Activated CD8-positive, alpha-beta memory T cell treated with anti-CD3 and anti-CD28 coated beads, Interleukin-2, amount 10 ng/mL, durations not matched to agents 7 days and 5 days (primary cell): ENCODE measurements at regions of chr4 and their contacts with region 1.

Region 1: DNA sequence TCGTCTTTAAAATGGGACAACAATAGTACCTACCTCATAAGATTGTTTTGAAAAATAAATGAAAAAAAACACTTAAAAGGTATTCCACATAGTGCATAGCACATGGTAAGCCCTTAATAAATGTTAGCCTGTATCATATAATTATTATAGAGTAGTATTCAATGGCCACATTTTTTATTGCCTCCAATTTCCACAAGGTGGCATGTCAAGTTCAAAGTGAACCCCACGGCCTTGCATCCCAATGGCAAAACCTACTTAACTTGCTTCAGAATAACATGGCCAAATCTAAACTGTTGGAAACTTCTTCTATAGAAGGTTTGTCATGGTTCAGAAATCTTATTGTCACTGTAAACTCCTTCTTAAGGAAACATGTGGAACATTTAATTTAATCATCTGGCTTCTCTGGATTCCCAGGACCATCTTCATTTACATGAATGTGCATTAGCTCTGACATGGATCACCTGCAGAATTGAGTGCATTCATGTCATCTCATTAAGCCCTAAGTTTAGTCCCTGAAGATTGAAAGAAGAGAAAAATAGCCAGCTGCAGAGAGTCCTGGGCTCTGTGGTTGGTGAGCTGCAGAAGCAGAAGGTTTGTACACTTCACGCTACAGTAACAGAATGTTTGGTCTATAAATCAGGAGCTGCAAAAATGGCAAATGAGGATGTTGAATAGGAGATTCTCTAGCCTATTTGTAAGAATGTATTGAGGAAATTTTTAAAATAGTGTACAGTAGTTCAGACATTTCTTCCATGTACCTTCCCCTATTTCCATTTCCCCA is 61.0 kb downstream of the ANXA3 start:
- DNase-seq: no peak
- ATAC-seq: peak; percentile 65
- H3K4me3 Mint-ChIP-seq: no peak overlapping the region
- H3K27ac Mint-ChIP-seq: no peak overlapping the region
- H3K4me1 Mint-ChIP-seq: peaks cover 29% of the 10 kb centered on the region
- H3K27me3 Mint-ChIP-seq: peaks cover 8% of the 10 kb centered on the region

Region 2: GRCh38 chr4:78601013-78601412 is 11.6 kb before region 1 on chr4:
- CTCF ChIA-PET with region 1: no interaction called
- DNase-seq: no peak
- ATAC-seq: no peak
- H3K4me3 Mint-ChIP-seq: no peak overlapping the region
- H3K27ac Mint-ChIP-seq: no peak overlapping the region
- H3K4me1 Mint-ChIP-seq: no peaks in the 10 kb centered on the region
- H3K27me3 Mint-ChIP-seq: peaks cover 22% of the 10 kb centered on the region

Region 3: GRCh38 chr4:78704981-78705683 is 92.5 kb after region 1 on chr4:
- CTCF ChIA-PET with region 1: no interaction called
- DNase-seq: no peak
- ATAC-seq: no peak
- H3K4me3 Mint-ChIP-seq: no peak overlapping the region
- H3K27ac Mint-ChIP-seq: no peak overlapping the region
- H3K4me1 Mint-ChIP-seq: no peaks in the 10 kb centered on the region
- H3K27me3 Mint-ChIP-seq: no peaks in the 10 kb centered on the region

Region 4: DNA sequence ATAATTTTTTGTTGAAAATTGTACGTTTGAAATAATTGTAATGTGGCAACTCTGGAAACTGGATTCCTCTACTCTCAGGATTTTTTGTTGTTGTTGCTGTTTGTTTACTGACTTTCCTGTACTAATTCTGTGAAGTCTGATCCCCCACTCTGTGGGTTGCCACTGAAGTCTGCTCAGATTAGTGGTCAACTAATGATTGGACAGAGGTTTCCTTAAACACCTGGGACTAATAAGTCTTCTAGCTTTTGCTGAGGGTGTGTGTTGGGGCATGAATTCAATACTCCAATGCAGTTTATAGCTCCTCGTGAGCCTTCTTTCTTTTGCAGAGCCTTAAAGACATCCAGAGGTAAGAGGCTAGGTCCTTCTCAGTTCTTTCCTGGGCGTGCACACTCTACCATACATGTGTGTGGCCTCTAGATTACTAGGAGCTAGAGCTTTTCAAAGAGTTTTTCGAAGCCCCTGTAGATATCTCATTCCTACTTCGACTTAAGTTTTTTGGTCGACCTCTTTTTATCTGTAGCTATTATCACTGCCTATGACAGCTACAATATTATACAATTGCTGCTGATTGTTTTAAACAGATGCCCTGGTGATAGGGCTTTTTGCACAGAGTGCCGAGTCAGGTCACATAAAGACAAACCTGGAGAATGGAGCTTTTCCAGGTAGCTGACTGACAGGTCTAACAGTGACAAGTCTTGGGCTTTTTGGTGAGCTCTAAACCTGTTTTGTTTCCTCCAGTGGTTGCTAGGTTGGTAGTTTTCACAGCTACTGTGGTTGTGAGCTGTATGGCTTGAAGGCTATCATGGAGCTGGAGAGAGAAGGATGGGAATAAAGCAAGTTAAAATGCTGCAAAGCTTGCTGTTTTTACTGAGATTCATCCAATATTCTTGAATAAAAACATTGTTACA is 197.6 kb after region 1 on chr4:
- CTCF ChIA-PET with region 1: no interaction called
- DNase-seq: no peak
- ATAC-seq: no peak
- H3K4me3 Mint-ChIP-seq: no peak overlapping the region
- H3K27ac Mint-ChIP-seq: no peak overlapping the region
- H3K4me1 Mint-ChIP-seq: no peaks in the 10 kb centered on the region
- H3K27me3 Mint-ChIP-seq: no peaks in the 10 kb centered on the region

Region 5: DNA sequence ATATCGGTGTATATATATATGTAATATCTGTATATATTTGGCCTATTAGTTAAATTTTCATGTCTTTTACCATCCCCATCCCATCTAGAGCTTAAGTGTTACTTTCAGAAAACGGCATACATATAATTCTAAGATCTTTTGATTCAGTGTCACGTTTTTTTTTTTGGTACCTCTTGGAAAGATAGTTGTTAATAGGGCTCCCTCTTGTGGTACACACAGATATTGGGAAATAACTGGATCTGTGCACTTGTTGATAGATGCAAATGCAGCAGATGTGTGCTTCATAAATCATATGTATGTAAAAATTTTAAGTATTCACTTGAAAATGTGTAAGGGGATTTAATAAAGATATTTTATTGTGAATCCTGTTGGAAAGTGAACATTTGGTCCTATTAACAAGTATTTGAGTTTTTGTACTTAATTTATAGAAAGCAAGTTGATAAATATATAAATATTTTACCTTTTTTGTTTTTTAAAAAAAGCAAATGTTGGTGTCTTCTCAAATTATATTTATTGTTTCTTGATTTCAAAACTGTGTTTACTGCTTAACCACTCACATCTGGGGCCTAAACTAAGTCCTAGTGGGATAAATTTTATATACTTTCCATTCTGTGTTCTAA is 251.9 kb after region 1 on chr4:
- CTCF ChIA-PET with region 1: interaction called, 21 read pairs
- DNase-seq: no peak
- ATAC-seq: peak; percentile 61
- H3K4me3 Mint-ChIP-seq: no peak overlapping the region
- H3K27ac Mint-ChIP-seq: no peak overlapping the region
- H3K4me1 Mint-ChIP-seq: peaks cover 4% of the 10 kb centered on the region
- H3K27me3 Mint-ChIP-seq: no peaks in the 10 kb centered on the region

Region 6: DNA sequence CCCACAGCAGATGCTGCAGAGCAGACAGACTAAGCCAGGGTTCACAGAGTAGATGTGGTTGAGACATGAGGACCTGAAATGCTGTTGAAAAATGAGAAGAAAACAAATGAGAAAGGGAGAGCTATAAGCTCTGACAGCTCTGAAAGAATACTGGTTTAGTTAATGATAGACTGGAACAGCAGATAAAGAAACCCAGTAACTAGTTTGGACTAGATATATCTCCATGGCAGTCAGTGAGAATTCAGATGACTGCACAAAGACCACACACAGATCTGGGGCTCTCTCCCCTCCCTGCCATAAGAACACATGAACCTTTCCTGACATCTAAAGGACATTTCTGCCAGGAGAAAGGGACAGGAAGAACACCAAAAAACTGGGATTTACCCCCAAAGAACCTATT is 705.1 kb after region 1 on chr4:
- CTCF ChIA-PET with region 1: no interaction called
- DNase-seq: no peak
- ATAC-seq: no peak
- H3K4me3 Mint-ChIP-seq: no peak overlapping the region
- H3K27ac Mint-ChIP-seq: no peak overlapping the region
- H3K4me1 Mint-ChIP-seq: no peaks in the 10 kb centered on the region
- H3K27me3 Mint-ChIP-seq: no peaks in the 10 kb centered on the region